ENCODE measurements at regions of chr6 and their contacts with region 1.

Region 1: GRCh38 chr6:35213824-35214756 is at the start of gene SCUBE3:
- DNase-seq: peak; percentile 70
- ATAC-seq: peak; percentile 74
- H3K4me3 Mint-ChIP-seq: peak within 1 kb of the TSS; percentile 80
- H3K27ac Mint-ChIP-seq: no peak within 1 kb of the TSS
- H3K4me1 Mint-ChIP-seq: peaks cover 43% of the 10 kb centered on the region
- H3K27me3 Mint-ChIP-seq: peaks cover 82% of the 10 kb centered on the region
- CTCF ChIP-seq: no peak
- total RNA-seq, gene SCUBE3: 1.6 to 2.1 TPM (median 1.8 TPM) in 3 replicates

Region 2: DNA sequence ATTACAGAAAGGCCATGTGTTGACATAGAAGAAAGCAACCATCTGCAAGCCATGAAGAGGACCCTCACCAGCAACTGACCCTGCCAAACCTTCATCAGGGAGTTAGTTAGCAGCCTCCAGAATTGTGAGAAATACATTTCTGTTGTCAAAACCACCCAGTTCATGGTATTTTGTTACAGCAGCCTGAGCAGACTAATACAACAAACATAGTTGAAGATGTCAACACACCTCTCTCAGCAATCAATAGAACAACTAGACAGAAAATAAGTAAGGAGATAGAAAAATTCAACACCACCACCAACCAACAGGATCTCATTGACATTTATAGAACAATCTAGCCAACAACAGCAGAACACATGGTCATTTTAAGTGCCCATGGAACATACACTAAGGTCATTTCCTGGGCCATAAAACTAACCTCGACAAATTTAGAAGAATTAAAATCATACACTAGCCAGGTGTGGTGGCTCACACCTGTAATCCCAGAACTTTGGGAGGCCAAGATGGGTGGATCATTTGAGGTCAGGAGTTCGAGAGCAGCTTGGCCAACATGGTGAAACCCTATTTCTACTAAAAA is 105.7 kb before region 1 on chr6:
- CTCF ChIA-PET with region 1: no interaction called
- POLR2A ChIA-PET with region 1: no interaction called
- DNase-seq: no peak
- ATAC-seq: no peak
- H3K4me3 Mint-ChIP-seq: no peak overlapping the region
- H3K27ac Mint-ChIP-seq: no peak overlapping the region
- H3K4me1 Mint-ChIP-seq: peaks cover 4% of the 10 kb centered on the region; the same call in 1 of the 2 replicates
- H3K27me3 Mint-ChIP-seq: no peaks in the 10 kb centered on the region; the same call in 1 of the 2 replicates
- CTCF ChIP-seq: no peak

Region 3: GRCh38 chr6:35146453-35146852 is 67.6 kb before region 1 on chr6:
- CTCF ChIA-PET with region 1: interaction called, 18 read pairs
- POLR2A ChIA-PET with region 1: interaction called, 4 read pairs
- DNase-seq: peak; percentile 56
- ATAC-seq: peak; percentile 15; the same call in 1 of the 2 replicates
- H3K4me3 Mint-ChIP-seq: no peak overlapping the region
- H3K27ac Mint-ChIP-seq: no peak overlapping the region
- H3K4me1 Mint-ChIP-seq: peaks cover 30% of the 10 kb centered on the region
- H3K27me3 Mint-ChIP-seq: peaks cover 60% of the 10 kb centered on the region
- CTCF ChIP-seq: no peak

Measured in WTC11 (cell line).